Breast epithelium (tissue), 4 donors: ENCODE measurements at regions of chr10 and their contacts with region 1.

Region 1: DNA sequence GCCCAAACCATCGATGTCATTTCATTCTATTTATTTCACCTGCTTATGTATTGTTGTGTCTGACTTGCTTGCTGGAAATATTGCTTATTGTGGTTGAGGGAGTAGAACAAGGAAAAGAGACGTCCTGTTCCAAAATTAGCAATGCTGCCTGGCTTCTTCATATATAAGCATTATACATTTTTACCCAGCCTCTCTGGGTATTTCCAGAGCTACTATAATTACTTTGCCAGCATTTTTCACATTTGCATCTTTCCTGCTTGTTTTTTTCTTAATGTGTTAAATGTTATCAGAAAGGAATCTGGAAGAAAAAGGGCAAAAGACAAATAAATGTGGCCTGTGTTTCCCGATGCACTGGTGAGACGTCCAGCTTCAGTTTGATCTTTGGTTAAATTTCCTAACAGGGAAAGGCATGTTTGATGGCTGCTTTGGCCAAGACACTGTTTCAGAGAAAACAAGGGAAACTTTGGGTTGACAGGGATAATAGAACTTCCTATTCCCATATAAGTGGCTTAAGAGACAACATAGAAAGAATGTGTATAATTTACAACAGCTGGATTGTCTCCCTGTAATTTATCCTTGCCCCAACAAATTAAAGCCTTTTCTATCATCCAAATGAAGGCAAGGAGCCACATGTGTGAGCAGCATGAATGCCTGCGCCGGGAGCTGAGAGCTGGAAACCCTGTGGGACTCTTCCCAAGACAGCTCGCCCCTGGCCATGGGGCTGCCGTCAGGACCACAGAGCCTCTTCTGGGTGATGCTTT is 671.1 kb upstream of the CELF2 start:
- DNase-seq: no peak
- H3K4me3 ChIP-seq: no peak overlapping the region
- H3K27ac ChIP-seq: no peak overlapping the region
- H3K4me1 ChIP-seq: no peaks in the 10 kb centered on the region
- H3K27me3 ChIP-seq: no peaks in the 10 kb centered on the region
- CTCF ChIP-seq: no peak
- POLR2A ChIP-seq: no peak

Region 2: GRCh38 chr10:9668411-9668810 is 678.2 kb before region 1 on chr10:
- intact Hi-C with region 1: loop called (anchors 5 kb)
- DNase-seq: no peak
- H3K4me3 ChIP-seq: no peak overlapping the region
- H3K27ac ChIP-seq: no peak overlapping the region
- H3K4me1 ChIP-seq: no peaks in the 10 kb centered on the region
- H3K27me3 ChIP-seq: no peaks in the 10 kb centered on the region
- CTCF ChIP-seq: no peak
- POLR2A ChIP-seq: no peak